A549 (cell line): ENCODE measurements at regions of chr10 and their contacts with region 1.

Region 1: DNA sequence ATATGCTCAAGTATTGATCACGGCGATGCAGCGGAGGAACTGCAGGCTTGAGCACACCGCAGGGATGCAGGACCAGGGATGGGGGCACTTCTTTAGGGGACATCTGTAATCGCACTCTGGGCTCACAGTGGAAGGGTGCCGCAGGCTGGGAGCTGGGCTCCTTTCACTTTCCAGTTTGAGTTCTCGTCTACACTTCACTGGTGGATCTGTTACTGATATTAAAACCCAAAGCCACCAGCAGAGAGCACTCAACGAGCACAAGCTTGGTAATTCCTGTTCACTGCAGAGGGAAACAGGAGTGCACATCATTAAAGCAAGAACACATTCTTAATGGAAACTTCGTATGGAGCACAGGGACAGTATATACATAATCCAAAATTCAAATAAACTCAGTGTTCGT is 91.3 kb downstream of the PARD3 start:
- DNase-seq: peak in 1 of 2 experiments; percentile 54
- ATAC-seq: peak; percentile 67 to 71
- H3K4me3 ChIP-seq: no peak overlapping the region
- H3K27ac ChIP-seq: 0 out of 6 replicates have a peak overlapping the region, but pooled peaks of 1 of the 2 experiments have one; percentile 16
- H3K4me1 ChIP-seq: peaks cover 59% of the 10 kb centered on the region
- CTCF ChIP-seq: peak; percentile 60
- EP300 ChIP-seq: no peak
- POLR2A ChIP-seq: no peak
- RAD21 ChIP-seq: peak; percentile 76 to 79

Region 2: GRCh38 chr10:34647875-34648865 is 75.6 kb before region 1 on chr10:
- CTCF ChIA-PET with region 1: no interaction called
- POLR2A ChIA-PET with region 1: no interaction called
- DNase-seq: no peak
- ATAC-seq: no peak
- H3K4me3 ChIP-seq: no peak overlapping the region
- H3K27ac ChIP-seq: no peak overlapping the region
- H3K4me1 ChIP-seq: no peaks in the 10 kb centered on the region
- CTCF ChIP-seq: no peak
- EP300 ChIP-seq: no peak
- POLR2A ChIP-seq: no peak
- RAD21 ChIP-seq: no peak

Region 3: GRCh38 chr10:34689053-34689452 is 34.7 kb before region 1 on chr10:
- CTCF ChIA-PET with region 1: interaction called, 11 read pairs
- POLR2A ChIA-PET with region 1: no interaction called
- DNase-seq: no peak
- ATAC-seq: no peak
- H3K4me3 ChIP-seq: no peak overlapping the region
- H3K27ac ChIP-seq: peak overlapping the region in 1 of 2 experiments; percentile 36; a peak in 1 of 6 replicates
- H3K4me1 ChIP-seq: peaks cover 25% of the 10 kb centered on the region
- CTCF ChIP-seq: no peak
- EP300 ChIP-seq: no peak
- POLR2A ChIP-seq: no peak
- RAD21 ChIP-seq: no peak

Region 4: GRCh38 chr10:34696423-34696822 is 27.3 kb before region 1 on chr10:
- CTCF ChIA-PET with region 1: interaction called, 11 read pairs
- POLR2A ChIA-PET with region 1: no interaction called
- DNase-seq: peak; percentile 46 to 50
- ATAC-seq: peak; percentile 64 to 70; a peak in 5 of 6 replicates
- H3K4me3 ChIP-seq: no peak overlapping the region
- H3K27ac ChIP-seq: peak overlapping the region; percentile 69 to 86; a peak in 5 of 6 replicates
- H3K4me1 ChIP-seq: peaks cover 61% of the 10 kb centered on the region
- CTCF ChIP-seq: no peak
- EP300 ChIP-seq: no peak
- POLR2A ChIP-seq: no peak
- RAD21 ChIP-seq: peak; percentile 9 to 10; a peak in 1 of 5 replicates